Ascending aorta (tissue), 2 donors: ENCODE measurements at regions of chr21 and their contacts with region 1.

Region 1: DNA sequence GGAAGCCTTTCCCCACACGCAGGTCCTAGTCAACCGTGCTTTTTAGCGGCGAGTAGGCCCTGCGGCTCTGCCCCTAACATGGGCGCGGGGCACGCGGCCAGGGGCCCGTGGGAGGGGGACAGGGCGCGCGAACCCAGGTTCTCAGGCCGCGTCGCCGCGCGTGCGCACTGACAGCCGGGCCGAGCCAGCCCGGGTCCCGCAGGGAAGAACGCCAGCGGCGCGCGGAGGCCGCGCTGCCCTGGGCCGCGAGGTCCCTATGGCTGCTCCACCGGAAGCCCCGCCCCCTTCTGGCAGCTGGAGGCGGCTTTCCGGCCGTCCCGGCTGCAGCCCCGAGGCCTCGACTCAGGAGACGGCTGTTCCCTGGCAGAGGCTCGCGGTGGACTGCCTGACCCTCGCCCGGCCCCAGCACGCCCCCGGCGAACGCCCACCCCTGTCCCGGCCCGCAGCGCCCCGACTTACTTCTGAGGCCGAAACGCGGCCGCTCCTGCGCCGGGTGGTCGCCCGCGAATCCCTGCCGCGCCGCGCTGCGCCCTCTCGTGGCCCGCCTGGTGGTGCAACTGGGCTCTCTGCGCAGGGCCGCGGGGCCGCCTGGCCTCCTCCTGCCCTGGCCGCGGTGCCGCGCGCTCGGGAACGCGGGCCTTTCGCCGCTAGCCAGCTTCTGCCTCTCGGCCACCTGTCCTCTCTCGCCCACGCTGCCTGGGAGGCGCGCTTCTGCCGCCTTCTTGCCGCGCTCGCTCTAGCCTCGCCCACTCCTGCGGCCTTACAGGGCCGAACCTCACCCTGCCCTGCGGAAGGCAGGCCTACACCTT is 16.6 kb upstream of the RIPPLY3 start:
- DNase-seq: peak; percentile 63 to 95
- H3K4me3 ChIP-seq: peak overlapping the region; percentile 61 to 80
- H3K27ac ChIP-seq: peak overlapping the region; percentile 93
- H3K4me1 ChIP-seq: peaks cover 0 to 3% of the 10 kb centered on the region in 2 donors
- H3K27me3 ChIP-seq: no peaks in the 10 kb centered on the region
- CTCF ChIP-seq: peak; percentile 71 to 95 (median 85)

Region 2: GRCh38 chr21:36934864-36935420 is 55.0 kb before region 1 on chr21:
- intact Hi-C with region 1: loop called (anchors 1 kb)
- DNase-seq: no peak
- H3K4me3 ChIP-seq: no peak overlapping the region
- H3K27ac ChIP-seq: no peak overlapping the region
- H3K4me1 ChIP-seq: peaks cover 5 to 8% of the 10 kb centered on the region in 2 donors
- H3K27me3 ChIP-seq: no peaks in the 10 kb centered on the region
- CTCF ChIP-seq: no peak

Region 3: DNA sequence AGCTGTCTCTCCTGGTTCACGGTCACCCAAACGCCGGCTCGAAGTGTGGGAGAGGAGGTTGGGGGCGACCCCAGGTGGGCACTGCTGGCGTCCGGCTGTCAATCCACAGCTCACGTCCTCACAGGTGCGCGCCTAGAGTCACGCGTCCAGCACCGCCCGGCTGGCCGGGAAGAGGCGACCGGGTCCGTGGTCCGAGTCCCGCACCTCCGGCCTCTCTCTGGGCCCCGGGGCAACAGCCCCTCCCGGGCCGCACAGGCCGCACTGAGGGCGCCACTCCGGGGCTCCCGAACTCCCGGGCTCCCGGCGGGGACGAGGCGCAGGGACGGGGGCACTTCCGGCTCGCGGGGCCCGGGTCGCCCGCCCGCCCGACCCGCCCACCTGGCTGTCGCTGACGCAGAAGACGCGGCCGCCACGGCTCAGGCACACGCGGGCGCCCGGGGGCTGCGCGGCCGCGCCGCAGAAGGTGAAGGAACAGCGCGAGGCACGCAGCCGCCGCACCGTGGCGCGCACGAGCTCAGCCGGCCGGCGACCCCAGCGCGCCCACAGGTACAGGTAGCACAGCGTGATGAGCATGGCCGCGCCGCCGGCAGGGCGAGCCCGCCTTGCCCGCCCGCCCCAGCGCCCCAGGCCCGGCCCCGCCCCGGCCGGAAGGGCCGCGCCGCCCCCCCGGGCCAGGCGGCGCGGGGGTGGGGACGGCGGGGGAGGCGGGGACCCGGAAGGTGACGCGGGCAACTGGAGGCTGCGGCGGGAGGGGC is 23.7 kb before region 1 on chr21 and contains the start of gene HLCS:
- intact Hi-C with region 1: loop called (anchors 1 kb)
- DNase-seq: peak in 1 of 2 donors; percentile 86
- H3K4me3 ChIP-seq: peak within 1 kb of the TSS; percentile 79 to 97
- H3K27ac ChIP-seq: peak within 1 kb of the TSS; percentile 86 to 89
- H3K4me1 ChIP-seq: peaks cover 2 to 5% of the 10 kb centered on the region in 2 donors
- H3K27me3 ChIP-seq: no peaks in the 10 kb centered on the region
- CTCF ChIP-seq: no peak
- total RNA-seq, gene HLCS: 10.7 TPM

Region 4: DNA sequence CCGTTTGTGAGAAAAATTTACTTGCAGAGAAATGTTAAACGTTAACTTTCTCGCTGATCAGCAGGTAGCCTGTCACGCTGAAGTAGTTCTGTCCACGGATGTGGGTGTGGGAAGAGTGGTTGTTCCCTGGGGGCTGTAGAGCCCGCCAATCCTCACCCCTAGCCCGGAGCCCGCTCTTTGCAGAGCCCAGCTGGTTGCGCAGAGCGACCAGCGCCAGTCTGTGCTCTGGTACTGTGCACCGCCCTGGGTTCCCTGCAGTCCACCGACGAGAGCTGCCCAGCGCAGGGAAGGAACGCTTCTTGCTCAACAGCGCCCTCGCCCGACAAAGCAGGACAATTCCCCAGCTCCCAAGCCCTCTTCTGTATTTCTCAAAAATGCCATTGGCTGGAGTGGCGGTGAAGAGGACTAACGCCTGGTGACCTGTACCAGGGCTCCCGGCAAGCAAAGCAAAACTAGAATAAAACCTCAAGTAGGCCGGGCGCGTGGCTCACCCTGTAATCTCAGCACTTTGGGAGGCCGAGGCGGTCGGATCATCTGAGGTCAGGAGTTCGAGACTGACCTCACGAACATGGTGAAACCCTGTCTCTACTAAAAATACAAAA is 19.9 kb after region 1 on chr21:
- intact Hi-C with region 1: loop called (anchors 2 kb)
- DNase-seq: peak; percentile 16 to 87
- H3K4me3 ChIP-seq: peak overlapping the region; percentile 39 to 53
- H3K27ac ChIP-seq: no peak overlapping the region
- H3K4me1 ChIP-seq: peaks cover 7 to 11% of the 10 kb centered on the region in 2 donors
- H3K27me3 ChIP-seq: no peaks in the 10 kb centered on the region
- CTCF ChIP-seq: peak; percentile 71 to 87 (median 79)

Region 5: GRCh38 chr21:37026499-37026898 is 36.6 kb after region 1 on chr21:
- intact Hi-C with region 1: no loop called
- DNase-seq: no peak
- H3K4me3 ChIP-seq: no peak overlapping the region
- H3K27ac ChIP-seq: no peak overlapping the region
- H3K4me1 ChIP-seq: no peaks in the 10 kb centered on the region
- H3K27me3 ChIP-seq: no peaks in the 10 kb centered on the region
- CTCF ChIP-seq: no peak

Region 6: DNA sequence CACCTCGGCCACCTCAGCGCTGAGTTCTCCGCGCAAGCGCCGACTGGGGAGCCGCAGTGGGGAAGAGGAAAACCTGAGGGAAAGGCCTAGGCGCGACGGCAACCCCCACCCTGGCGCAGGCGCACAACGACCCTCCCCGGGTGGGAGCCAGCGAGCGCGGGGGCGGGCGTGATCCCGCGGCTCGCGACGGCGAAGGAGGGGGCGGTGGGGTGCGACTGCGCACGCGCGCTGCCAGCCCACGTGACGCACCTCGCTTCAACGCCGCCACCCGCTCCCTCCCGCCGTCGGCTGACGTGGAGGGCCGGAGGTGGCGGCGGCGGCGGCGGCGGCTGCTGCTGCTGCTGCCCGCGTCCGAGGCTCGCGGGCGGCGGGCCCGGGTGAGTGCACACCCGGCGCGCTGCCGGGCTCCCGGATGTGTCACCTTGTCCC is 83.1 kb after region 1 on chr21 and contains the starts of genes PIGP and TTC3:
- intact Hi-C with region 1: loop called (anchors 1 kb)
- DNase-seq: peak; percentile 73 to 96
- H3K4me3 ChIP-seq: peak within 1 kb of the TSS; percentile 84 to 96
- H3K27ac ChIP-seq: peak within 1 kb of the TSS; percentile 95 to 100
- H3K4me1 ChIP-seq: peaks cover 0 to 15% of the 10 kb centered on the region in 2 donors
- H3K27me3 ChIP-seq: no peaks in the 10 kb centered on the region
- CTCF ChIP-seq: no peak
- total RNA-seq, gene PIGP: 0.64 TPM
- total RNA-seq, gene TTC3: 70.7 TPM